PC-3 (cell line): ENCODE measurements at regions of chr12 and their contacts with region 1.

Region 1: DNA sequence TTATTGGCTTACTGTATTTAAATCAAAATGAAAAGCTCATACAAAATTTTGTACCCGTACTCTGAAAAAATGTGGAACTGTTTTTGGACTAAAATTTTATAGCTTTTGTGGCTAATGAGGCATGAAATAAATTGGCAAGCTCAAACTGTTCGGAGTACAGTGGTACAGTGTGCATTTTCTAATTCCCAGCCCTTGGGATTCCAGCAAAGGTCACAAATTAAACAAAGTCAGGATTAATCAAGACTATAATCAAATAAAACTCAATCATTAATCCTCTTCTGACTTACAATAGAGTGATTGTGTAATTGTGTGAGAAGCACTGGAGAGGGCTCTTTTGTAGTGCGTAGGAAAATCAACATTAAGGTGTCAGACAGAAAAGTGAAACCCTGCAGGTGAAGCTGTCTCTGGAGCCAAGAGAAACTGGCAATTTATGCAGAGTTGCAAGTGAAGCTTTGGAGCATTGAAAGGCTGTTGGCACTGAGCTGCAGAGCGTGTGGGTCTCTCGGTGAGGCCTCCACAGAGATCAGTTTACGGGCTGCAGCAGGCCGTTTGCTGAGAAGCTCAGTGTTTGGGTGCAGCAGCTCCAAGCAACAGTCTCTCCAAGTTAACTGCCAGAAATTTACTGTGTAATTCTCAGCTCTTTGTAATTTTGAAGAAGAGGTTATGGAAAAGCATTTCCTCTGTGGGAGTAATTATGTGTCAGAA is 275.9 kb downstream of the FBXL14 start:
- DNase-seq: peak; percentile 62
- ATAC-seq: peak; percentile 87
- H3K4me3 ChIP-seq: peak overlapping the region; percentile 53
- H3K27ac ChIP-seq: peak overlapping the region; percentile 78
- H3K4me1 ChIP-seq: peaks cover 20% of the 10 kb centered on the region
- H3K27me3 ChIP-seq: no peaks in the 10 kb centered on the region
- CTCF ChIP-seq: no peak

Region 2: DNA sequence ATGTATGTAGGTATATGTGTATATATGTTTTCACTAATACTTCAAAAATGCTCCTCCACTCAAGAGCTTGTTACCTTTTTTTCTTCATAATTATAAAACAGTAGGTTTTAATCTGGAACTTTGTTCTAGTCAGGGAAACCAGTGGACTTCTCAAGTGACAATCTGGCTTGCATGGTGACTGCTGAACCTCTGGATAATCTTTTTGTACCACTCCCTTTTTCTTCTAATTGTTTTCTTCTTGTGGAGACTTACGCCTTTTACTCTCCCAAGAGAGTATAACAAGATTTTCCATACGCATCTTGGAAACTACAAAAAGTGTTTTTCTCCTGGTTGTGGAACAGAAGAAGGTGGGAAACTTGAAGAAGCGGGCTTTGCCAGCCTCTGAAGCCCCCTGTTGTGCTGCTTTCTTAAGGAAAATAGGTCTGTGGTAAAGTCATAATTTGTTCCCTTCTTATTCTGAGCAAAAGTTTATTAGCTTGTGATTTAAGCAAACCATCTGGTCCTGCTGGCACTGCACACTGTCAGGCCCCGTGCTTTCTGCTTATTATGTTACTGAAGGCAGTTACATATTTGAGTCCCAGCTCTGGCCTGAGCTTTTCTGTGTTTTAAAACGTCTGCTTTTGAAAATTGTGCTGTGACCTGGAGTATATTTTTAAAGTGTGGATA is 35.7 kb before region 1 on chr12:
- CTCF ChIA-PET with region 1: no interaction called
- POLR2A ChIA-PET with region 1: no interaction called
- intact Hi-C with region 1: loop called (anchors 1 kb)
- DNase-seq: no peak
- ATAC-seq: no peak
- H3K4me3 ChIP-seq: no peak overlapping the region
- H3K27ac ChIP-seq: no peak overlapping the region
- H3K4me1 ChIP-seq: peaks cover 10% of the 10 kb centered on the region
- H3K27me3 ChIP-seq: no peaks in the 10 kb centered on the region
- CTCF ChIP-seq: no peak

Region 3: DNA sequence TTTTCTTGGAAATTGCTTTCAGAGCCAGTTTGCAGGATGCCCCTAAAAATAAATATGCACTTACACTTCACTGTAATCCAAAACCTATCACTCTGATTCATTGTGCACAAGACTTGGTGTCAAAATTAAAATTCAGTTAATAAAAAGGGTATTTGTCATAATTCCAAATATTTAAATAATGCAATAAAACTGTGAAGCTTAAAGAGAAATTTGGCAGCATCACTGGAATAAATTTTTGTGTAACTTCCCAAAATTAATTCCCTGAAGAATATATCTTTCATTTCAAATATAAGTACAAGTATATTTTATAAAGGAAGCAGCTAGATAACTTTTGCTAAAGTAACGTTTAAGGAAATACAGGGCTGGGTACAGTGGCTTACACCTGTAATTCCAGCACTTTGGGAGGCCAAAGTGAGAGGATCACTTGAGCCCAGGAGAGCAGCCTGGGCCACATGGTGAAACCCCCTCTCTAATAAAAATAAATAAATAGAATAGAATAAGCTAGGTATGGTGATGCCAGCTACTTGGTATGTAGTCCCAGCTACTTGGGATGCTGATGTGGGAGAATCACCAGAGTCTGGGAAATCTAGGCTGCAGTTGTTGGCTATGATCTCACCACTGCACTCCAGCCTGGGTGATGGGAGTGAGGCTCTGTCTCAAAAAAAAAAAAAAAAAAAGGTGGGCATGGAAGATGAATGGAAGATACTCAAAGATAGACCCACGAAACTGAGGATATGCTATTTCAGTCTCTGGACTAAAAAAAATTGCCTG is 42.1 kb after region 1 on chr12:
- CTCF ChIA-PET with region 1: no interaction called
- POLR2A ChIA-PET with region 1: no interaction called
- intact Hi-C with region 1: no loop called
- DNase-seq: no peak
- ATAC-seq: no peak
- H3K4me3 ChIP-seq: no peak overlapping the region
- H3K27ac ChIP-seq: no peak overlapping the region
- H3K4me1 ChIP-seq: no peaks in the 10 kb centered on the region
- H3K27me3 ChIP-seq: no peaks in the 10 kb centered on the region
- CTCF ChIP-seq: no peak

Region 4: GRCh38 chr12:1474041-1474573 is 155.6 kb after region 1 on chr12:
- CTCF ChIA-PET with region 1: no interaction called
- POLR2A ChIA-PET with region 1: no interaction called
- intact Hi-C with region 1: loop called (anchors 10 kb)
- DNase-seq: peak; percentile 95
- ATAC-seq: peak; percentile 89
- H3K4me3 ChIP-seq: peak overlapping the region; percentile 55
- H3K27ac ChIP-seq: peak overlapping the region; percentile 95
- H3K4me1 ChIP-seq: peaks cover 33% of the 10 kb centered on the region
- H3K27me3 ChIP-seq: no peaks in the 10 kb centered on the region
- CTCF ChIP-seq: no peak